H1 (cell line): ENCODE measurements at regions of chr11 and their contacts with region 1.

Region 1: DNA sequence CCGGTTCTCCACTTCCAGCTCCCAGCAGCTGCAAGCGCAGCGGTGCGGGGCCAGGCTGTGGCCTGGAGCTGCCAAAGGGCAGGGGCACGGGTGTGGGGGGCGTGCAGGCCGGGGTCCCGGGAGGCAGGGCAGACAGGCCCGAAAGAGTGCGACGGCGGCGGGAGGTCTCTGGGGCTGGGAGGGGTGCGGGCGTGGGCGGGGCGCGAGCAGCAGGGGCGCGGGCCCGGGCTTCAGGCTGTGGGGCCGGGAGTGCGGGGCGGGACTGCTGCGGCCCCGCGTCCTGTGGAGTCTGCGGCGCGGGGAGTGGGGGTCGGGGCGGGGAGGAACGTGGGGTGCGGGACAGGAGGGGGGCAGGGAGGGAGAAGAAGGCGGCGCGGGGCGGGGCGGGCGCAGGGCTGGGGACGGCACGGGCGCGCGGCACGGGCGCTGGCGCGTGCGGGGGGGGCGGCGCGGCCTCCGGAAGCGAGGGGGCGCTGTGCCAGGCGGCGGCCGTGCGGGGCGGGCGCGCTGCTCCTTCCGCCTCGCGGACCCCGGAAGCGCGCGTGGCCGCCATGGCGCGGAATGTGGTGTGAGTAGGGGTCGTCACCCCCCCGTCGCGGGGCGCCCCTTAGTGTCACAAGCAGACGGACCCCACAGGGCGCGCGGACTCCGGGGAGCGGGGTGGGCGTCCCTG is at the start of gene MRPL23:
- DNase-seq: no peak
- H3K4me3 ChIP-seq: no peak within 1 kb of the TSS
- H3K27ac ChIP-seq: no peak within 1 kb of the TSS
- H3K4me1 ChIP-seq: peaks cover 0 to 7% (median 0%) of the 10 kb centered on the region in 4 experiments; a peak in 2 of 7 replicates
- H3K27me3 ChIP-seq: no peaks in the 10 kb centered on the region
- CTCF ChIP-seq: no peak
- EP300 ChIP-seq: no peak
- POLR2A ChIP-seq: no peak
- RAD21 ChIP-seq: no peak
- total RNA-seq, gene MRPL23: 86.0 and 86.4 TPM in 2 replicates

Region 2: GRCh38 chr11:1262172-1263006 is 684.6 kb before region 1 on chr11:
- CTCF ChIA-PET with region 1: no interaction called
- POLR2A ChIA-PET with region 1: no interaction called
- DNase-seq: peak; percentile 62 to 83
- H3K4me3 ChIP-seq: peak overlapping the region; percentile 13 to 58 (median 33)
- H3K27ac ChIP-seq: peak overlapping the region; percentile 60; the same call in 1 of the 2 replicates
- H3K4me1 ChIP-seq: peaks cover 0 to 14% (median 6%) of the 10 kb centered on the region in 4 experiments; a peak in 5 of 7 replicates
- H3K27me3 ChIP-seq: no peaks in the 10 kb centered on the region
- CTCF ChIP-seq: no peak
- EP300 ChIP-seq: no peak
- POLR2A ChIP-seq: peak in 1 of 2 experiments; percentile 89; a peak in 2 of 3 replicates
- RAD21 ChIP-seq: no peak

Region 3: GRCh38 chr11:1908618-1909017 is 38.3 kb before region 1 on chr11:
- CTCF ChIA-PET with region 1: interaction called, 13 read pairs
- POLR2A ChIA-PET with region 1: interaction called, 3 read pairs
- DNase-seq: no peak
- H3K4me3 ChIP-seq: no peak overlapping the region
- H3K27ac ChIP-seq: no peak overlapping the region
- H3K4me1 ChIP-seq: peaks cover 2 to 10% (median 6%) of the 10 kb centered on the region in 4 experiments; a peak in 6 of 7 replicates
- H3K27me3 ChIP-seq: peaks cover 0 to 3% (median 2%) of the 10 kb centered on the region in 4 experiments; a peak in 1 of 7 replicates
- CTCF ChIP-seq: no peak
- EP300 ChIP-seq: no peak
- POLR2A ChIP-seq: no peak
- RAD21 ChIP-seq: no peak

Region 4: DNA sequence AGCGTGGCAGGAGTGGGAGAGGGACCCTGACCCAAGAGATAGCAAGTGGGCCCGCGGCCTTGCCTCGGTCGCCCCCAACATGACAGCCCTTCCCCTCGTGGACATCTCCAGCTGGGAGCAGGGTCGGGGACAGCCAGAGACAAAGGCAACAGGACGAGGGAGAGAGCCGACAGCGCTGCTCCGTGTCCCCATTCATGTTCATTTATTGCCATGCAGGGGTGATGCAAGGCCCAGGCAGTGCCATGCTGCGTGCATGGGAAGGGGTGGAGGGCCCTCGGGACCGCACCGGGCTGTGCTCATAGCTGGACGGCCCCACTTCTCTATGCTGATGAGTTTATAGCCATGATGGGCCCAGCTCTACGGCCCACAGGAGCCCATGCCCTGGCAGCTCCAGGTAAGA is 12.8 kb after region 1 on chr11:
- CTCF ChIA-PET with region 1: interaction called, 15 read pairs
- POLR2A ChIA-PET with region 1: interaction called, 5 read pairs
- DNase-seq: no peak
- H3K4me3 ChIP-seq: no peak overlapping the region
- H3K27ac ChIP-seq: no peak overlapping the region
- H3K4me1 ChIP-seq: no peaks in the 10 kb centered on the region
- H3K27me3 ChIP-seq: no peaks in the 10 kb centered on the region
- CTCF ChIP-seq: no peak
- EP300 ChIP-seq: no peak
- POLR2A ChIP-seq: no peak
- RAD21 ChIP-seq: no peak

Region 5: DNA sequence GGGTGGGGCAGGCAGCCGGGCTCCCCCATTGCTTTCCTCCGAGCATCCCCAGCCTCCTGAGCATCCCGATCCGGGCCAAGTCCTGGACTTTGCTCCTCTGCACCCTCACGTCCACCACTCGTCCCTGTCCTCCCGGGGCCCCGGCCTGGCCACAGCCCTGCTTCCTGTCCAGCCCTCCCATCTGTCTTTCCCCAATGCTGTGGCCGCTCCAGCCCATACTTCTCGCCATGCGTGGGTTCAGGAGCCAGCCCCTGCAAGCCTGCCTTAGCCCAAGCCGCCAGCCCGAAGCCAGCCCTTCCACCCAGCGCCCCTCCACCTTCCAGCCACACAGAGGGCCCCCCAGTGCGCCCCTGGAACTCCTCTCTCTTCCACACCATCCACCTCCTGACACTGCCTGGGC is 24.0 kb after region 1 on chr11:
- CTCF ChIA-PET with region 1: interaction called, 10 read pairs
- POLR2A ChIA-PET with region 1: interaction called, 5 read pairs
- DNase-seq: no peak
- H3K4me3 ChIP-seq: no peak overlapping the region
- H3K27ac ChIP-seq: no peak overlapping the region
- H3K4me1 ChIP-seq: no peaks in the 10 kb centered on the region
- H3K27me3 ChIP-seq: no peaks in the 10 kb centered on the region
- CTCF ChIP-seq: no peak
- EP300 ChIP-seq: no peak
- POLR2A ChIP-seq: no peak
- RAD21 ChIP-seq: no peak